ENCODE measurements at regions of chr6 and their contacts with region 1.

Region 1: GRCh38 chr6:34005901-34006531 is 139.9 kb downstream of the GRM4 start:
- DNase-seq: no peak
- ATAC-seq: no peak
- H3K4me3 ChIP-seq: no peak overlapping the region
- H3K27ac ChIP-seq: no peak overlapping the region
- H3K4me1 ChIP-seq: no peaks in the 10 kb centered on the region
- H3K27me3 ChIP-seq: no peaks in the 10 kb centered on the region
- CTCF ChIP-seq: no peak

Region 2: DNA sequence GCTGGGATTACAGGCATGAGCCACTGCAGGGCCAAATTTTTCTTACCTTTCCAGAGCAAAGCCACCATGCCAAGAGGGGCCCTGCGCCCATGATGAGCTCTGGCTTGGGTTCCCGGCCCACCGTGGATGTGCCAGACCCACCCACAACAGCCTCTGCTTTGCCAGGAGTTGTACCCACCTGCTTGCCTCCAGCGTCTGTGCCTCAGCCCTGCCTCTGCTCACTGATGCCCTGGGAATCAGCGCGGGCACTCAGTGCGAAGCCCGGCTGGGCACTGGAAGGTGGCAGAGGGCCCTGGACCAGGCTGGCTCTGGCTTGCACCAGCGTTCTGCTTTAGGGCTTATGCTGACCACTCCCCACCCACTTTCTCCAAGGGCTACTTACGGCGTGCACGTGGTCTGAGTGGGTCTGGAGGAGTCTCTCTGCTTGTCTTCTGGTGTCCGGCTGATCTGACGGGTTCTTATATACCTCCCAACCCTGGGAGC is 202.4 kb before region 1 on chr6 and contains the start of gene MLN:
- CTCF ChIA-PET with region 1: no interaction called
- POLR2A ChIA-PET with region 1: interaction called, 13 read pairs
- in situ Hi-C with region 1: no loop called
- intact Hi-C with region 1: no loop called
- DNase-seq: no peak
- ATAC-seq: no peak
- H3K4me3 ChIP-seq: no peak within 1 kb of the TSS
- H3K27ac ChIP-seq: no peak within 1 kb of the TSS
- H3K4me1 ChIP-seq: no peaks in the 10 kb centered on the region
- H3K27me3 ChIP-seq: no peaks in the 10 kb centered on the region
- CTCF ChIP-seq: no peak
- total RNA-seq, gene MLN: not detected

Measured in Panc1 (cell line).